CD8-positive, alpha-beta T cell (primary cell): ENCODE measurements at regions of chr2 and their contacts with region 1.

Region 1: GRCh38 chr2:201344663-201345366 is 12.3 kb downstream of the FLACC1 start:
- DNase-seq: no peak
- ATAC-seq: no peak
- H3K4me3 ChIP-seq: no peak overlapping the region
- H3K4me3 Mint-ChIP-seq: no peak overlapping the region
- H3K27ac ChIP-seq: no peak overlapping the region
- H3K27ac Mint-ChIP-seq: no peak overlapping the region
- H3K4me1 ChIP-seq: no peaks in the 10 kb centered on the region
- H3K4me1 Mint-ChIP-seq: peaks cover 6% of the 10 kb centered on the region
- H3K27me3 ChIP-seq: no peaks in the 10 kb centered on the region
- H3K27me3 Mint-ChIP-seq: no peaks in the 10 kb centered on the region
- CTCF ChIP-seq: no peak

Region 2: DNA sequence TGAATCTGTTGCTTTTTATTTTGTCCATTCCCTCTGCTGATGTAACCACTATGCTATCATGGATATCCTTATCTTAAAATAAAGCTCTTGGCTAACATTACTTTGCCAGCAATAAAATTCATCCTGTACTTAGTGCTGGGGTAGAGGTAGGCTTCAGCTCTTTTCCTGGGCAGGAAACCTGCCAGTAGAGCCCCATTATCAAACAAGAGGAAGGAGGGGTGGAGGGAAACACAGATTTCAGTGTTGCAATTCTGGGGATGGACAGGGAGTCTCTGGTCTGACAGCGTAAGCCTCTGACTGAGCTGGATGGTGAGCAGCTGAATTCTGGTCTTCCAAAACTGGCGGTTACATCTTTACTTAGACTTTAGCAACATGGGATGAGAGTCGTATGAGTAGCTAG is 36.9 kb before region 1 on chr2:
- CTCF ChIA-PET with region 1: no interaction called
- POLR2A ChIA-PET with region 1: no interaction called
- intact Hi-C with region 1: loop called in 1 of 2 experiments (anchors 5 kb)
- DNase-seq: no peak
- ATAC-seq: no peak
- H3K4me3 ChIP-seq: no peak overlapping the region
- H3K4me3 Mint-ChIP-seq: no peak overlapping the region
- H3K27ac ChIP-seq: no peak overlapping the region
- H3K27ac Mint-ChIP-seq: no peak overlapping the region
- H3K4me1 ChIP-seq: no peaks in the 10 kb centered on the region
- H3K4me1 Mint-ChIP-seq: no peaks in the 10 kb centered on the region
- H3K27me3 ChIP-seq: no peaks in the 10 kb centered on the region
- H3K27me3 Mint-ChIP-seq: no peaks in the 10 kb centered on the region
- CTCF ChIP-seq: no peak